Heart left ventricle (tissue), 16 donors: ENCODE measurements at regions of chr17 and their contacts with region 1.

Region 1: DNA sequence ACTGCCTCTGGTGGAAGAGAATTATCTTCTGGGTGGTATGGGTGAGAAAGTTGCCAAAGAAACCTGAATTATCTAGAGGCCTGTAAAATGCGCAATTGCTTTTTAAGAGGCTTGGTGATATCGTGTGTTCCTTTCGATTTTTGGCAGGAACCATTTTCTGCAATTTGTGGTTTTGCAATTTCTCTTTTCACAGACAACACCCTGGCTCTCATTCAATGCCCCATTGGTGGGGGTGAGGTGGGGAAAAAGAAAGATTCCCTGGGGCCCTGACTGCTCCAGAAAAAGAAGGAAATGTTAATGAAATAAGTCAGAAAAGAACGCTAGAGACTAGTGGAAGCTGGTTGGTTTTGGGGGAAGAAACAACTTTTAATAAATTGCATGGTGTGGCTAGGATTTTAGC is 77.4 kb downstream of the ANKFN1 start:
- DNase-seq: peak in 1 of 5 donors; percentile 25
- ATAC-seq: peak in 1 of 4 donors; percentile 24
- H3K4me3 ChIP-seq: no peak overlapping the region
- H3K27ac ChIP-seq: no peak overlapping the region
- H3K4me1 ChIP-seq: peaks cover 0 to 9% (median 0%) of the 10 kb centered on the region in 12 donors
- H3K27me3 ChIP-seq: no peaks in the 10 kb centered on the region
- CTCF ChIP-seq: no peak
- POLR2A ChIP-seq: no peak

Region 2: DNA sequence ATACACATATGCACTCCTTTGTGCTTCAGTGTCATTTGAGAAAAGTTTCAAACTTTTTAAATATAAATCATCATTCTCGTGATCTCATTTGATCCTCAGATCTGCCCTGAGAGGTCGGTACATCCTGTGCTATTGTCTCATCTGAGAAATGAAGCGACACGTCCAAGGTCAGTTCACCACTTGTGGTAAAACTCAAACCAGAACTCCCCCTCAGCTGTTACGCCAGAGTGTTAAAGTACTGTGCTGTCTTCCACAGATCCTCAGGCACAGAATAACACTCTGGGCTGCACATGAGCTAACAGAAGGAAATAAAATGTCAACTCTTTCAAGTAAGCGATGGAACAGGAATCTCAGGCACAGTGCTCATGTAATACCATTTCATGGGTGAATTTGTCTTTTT is 46.0 kb before region 1 on chr17:
- intact Hi-C with region 1: loop called in 1 of 10 experiments (anchors 5 kb)
- DNase-seq: no peak
- ATAC-seq: no peak
- H3K4me3 ChIP-seq: no peak overlapping the region
- H3K27ac ChIP-seq: no peak overlapping the region
- H3K4me1 ChIP-seq: no peaks in the 10 kb centered on the region
- H3K27me3 ChIP-seq: no peaks in the 10 kb centered on the region
- CTCF ChIP-seq: no peak
- POLR2A ChIP-seq: no peak